ENCODE measurements at regions of chr15 and their contacts with region 1.

Region 1: DNA sequence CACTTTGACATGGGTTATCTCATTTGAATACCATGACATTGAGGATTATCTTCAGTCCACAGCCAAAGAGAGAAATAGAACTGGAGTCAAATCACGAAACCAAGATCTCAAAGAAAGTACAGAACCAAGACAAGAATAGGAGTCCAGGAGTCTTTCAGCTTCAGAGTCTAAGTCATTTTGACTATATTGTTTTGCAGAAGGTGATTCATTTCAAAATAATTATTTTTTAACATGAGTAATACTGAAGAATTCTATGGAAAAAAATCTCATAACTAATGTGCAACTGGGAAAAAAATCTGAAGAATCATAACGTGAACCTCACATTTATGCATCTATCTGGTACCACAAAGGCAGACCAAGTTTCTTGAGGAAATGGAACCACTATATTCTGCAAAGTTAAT is 60.3 kb downstream of the UBE3A start:
- H3K4me3 Mint-ChIP-seq: no peak overlapping the region
- H3K27ac Mint-ChIP-seq: no peak overlapping the region
- H3K4me1 Mint-ChIP-seq: peaks cover 5% of the 10 kb centered on the region
- H3K27me3 Mint-ChIP-seq: no peaks in the 10 kb centered on the region

Region 2: DNA sequence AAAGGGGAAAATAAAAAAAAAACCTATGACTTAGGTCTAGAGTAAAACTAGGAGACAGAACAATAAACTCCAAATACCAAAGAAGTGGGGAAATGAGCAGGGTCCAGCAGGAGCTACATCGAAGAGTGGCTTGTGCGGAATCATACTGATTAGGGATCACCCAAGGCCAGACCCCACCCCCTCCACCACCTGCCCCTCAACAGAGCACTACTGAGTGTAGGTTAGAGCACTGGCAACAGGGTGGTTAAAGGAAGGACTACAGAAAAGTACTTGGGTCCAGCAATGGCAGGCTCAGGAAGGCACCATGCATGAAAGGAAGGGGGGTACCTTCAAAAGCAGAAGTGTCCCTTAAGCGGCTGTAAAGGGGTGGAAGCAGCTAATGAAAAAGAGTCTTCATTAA is 35.9 kb before region 1 on chr15:
- intact Hi-C with region 1: loop called (anchors 5 kb)
- H3K4me3 Mint-ChIP-seq: no peak overlapping the region
- H3K27ac Mint-ChIP-seq: no peak overlapping the region
- H3K4me1 Mint-ChIP-seq: no peaks in the 10 kb centered on the region
- H3K27me3 Mint-ChIP-seq: no peaks in the 10 kb centered on the region